SK-N-SH (cell line): ENCODE measurements at regions of chr19 and their contacts with region 1.

Region 1: DNA sequence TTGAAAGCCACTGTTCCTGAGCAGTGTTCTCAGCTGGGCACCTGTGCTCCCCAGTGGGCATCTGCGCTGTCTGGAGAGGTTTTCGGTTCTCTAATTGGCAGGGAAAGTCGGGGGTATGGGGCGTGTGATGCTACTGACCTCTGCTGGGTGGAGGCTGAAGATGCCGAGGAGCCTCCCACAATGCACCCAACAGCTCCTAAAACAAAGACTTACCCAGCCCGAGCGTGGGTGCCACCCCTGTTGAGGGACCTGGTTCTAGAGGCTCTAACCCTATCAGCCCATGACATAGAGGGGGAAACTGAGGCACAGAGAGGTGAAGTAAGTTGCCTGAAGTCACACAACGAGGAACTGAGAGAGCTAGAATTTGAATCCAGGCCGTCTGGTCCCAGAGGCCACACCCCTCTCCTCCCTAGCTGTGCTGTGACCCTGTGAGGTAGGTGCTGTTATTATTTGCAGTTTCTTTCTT is 2.3 kb downstream of the SPACA4 start:
- DNase-seq: peak; percentile 86
- H3K4me3 ChIP-seq: no peak overlapping the region
- H3K27ac ChIP-seq: no peak overlapping the region
- H3K4me1 ChIP-seq: peaks cover 0 to 5% of the 10 kb centered on the region in 2 experiments; a peak in 1 of 4 replicates
- H3K27me3 ChIP-seq: no peaks in the 10 kb centered on the region
- CTCF ChIP-seq: peak; percentile 64
- EP300 ChIP-seq: no peak
- RAD21 ChIP-seq: peak; percentile 71

Region 2: DNA sequence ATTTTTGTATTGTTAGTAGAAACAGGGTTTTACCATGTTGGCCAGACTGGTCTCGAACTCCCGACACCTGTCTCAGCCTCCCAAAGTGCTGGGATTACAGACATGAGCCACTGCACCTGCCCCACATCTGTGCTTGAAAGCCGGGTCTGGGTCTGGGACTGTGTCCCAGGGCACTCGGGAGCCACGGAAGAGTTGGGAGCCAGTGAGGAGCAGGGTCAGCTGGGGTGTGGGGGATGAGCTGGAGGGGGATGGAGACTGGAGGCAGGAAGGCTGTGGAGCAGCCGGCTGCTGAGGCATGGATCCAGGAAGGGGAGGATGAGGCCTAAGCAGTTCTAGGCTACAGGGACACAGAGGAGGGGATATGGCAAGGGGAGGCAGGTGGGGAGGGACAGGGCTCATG is 13.0 kb before region 1 on chr19:
- CTCF ChIA-PET with region 1: interaction called, 72 read pairs
- POLR2A ChIA-PET with region 1: interaction called, 3 read pairs
- DNase-seq: no peak
- H3K4me3 ChIP-seq: no peak overlapping the region
- H3K27ac ChIP-seq: no peak overlapping the region
- H3K4me1 ChIP-seq: no peaks in the 10 kb centered on the region
- H3K27me3 ChIP-seq: no peaks in the 10 kb centered on the region; the same call in 1 of the 2 replicates
- CTCF ChIP-seq: no peak
- EP300 ChIP-seq: no peak
- RAD21 ChIP-seq: no peak

Region 3: GRCh38 chr19:48618916-48619691 is 10.3 kb after region 1 on chr19 and contains the starts of genes RPL18 and SPHK2:
- CTCF ChIA-PET with region 1: interaction called, 26 read pairs
- POLR2A ChIA-PET with region 1: interaction called, 17 read pairs
- DNase-seq: peak; percentile 97
- H3K4me3 ChIP-seq: peak within 1 kb of the TSS; percentile 93 to 99
- H3K27ac ChIP-seq: peak within 1 kb of the TSS; percentile 74 to 92
- H3K4me1 ChIP-seq: peaks cover 15 to 41% of the 10 kb centered on the region in 2 experiments; a peak in 3 of 4 replicates
- H3K27me3 ChIP-seq: no peaks in the 10 kb centered on the region
- CTCF ChIP-seq: no peak
- EP300 ChIP-seq: peak; percentile 31 to 62; a peak in 1 of 4 replicates
- RAD21 ChIP-seq: 0 out of 2 replicates have a peak, but pooled peaks have one; percentile 14
- polyA plus RNA-seq, gene RPL18: 2,114 and 2,225 TPM in 2 replicates
- polyA plus RNA-seq, gene SPHK2: 14.1 and 14.8 TPM in 2 replicates

Region 4: GRCh38 chr19:48660854-48661731 is 52.3 kb after region 1 on chr19:
- CTCF ChIA-PET with region 1: no interaction called
- POLR2A ChIA-PET with region 1: no interaction called
- DNase-seq: peak; percentile 88
- H3K4me3 ChIP-seq: no peak overlapping the region
- H3K27ac ChIP-seq: no peak overlapping the region; a peak in 1 of 4 replicates
- H3K4me1 ChIP-seq: peaks cover 0 to 2% of the 10 kb centered on the region in 2 experiments; a peak in 1 of 4 replicates
- H3K27me3 ChIP-seq: no peaks in the 10 kb centered on the region
- CTCF ChIP-seq: no peak
- EP300 ChIP-seq: no peak
- RAD21 ChIP-seq: no peak